Mucosa of descending colon (tissue), 3 donors: ENCODE measurements at regions of chr19 and their contacts with region 1.

Region 1: GRCh38 chr19:33143897-33144405 is 12.0 kb downstream of the WDR88 start:
- DNase-seq: peak; percentile 61 to 75 (median 71)
- ATAC-seq: peak; percentile 98
- H3K4me3 ChIP-seq: no peak overlapping the region
- H3K4me1 ChIP-seq: peaks cover 2% of the 10 kb centered on the region
- CTCF ChIP-seq: peak; percentile 91

Region 2: DNA sequence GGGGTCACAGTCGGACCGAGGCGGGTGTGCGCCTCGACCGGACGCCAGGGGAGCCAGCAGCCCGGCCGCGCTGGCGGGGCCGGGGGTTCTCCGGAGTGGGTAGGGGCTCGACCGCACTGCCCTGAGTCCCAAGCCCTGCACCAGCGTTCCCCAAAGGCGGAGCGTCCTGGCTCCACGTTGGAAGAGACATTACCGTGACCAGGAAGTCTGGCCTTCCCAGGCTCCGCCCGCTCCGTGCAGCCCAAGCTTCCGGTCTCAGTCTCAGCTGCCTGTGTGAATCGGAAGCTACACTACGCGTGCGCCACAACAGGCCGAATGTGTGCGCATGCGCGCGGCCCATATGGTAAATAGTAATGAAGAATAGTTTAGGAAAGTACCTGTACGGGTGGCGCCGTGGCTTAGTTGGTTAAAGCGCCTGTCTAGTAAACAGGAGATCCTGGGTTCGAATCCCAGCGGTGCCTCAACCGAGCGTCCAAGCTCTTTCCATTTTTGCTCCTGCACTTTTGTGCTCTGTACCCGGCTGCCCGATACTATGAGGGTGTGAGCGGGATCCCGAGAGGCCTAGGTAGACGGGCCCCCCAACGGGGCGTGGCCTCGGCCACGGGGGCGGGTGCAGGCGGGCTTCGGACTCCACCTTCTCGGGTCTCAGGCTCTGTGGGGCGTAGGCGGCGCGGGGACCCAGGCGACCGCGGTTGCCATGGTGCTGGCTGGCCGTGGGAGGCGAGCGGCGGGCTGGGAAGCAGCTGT is 32.9 kb after region 1 on chr19:
- intact Hi-C with region 1: loop called (anchors 5 kb)
- DNase-seq: peak; percentile 96 to 98 (median 97)
- ATAC-seq: peak; percentile 92
- H3K4me3 ChIP-seq: peak overlapping the region; percentile 74
- H3K4me1 ChIP-seq: peaks cover 13% of the 10 kb centered on the region
- CTCF ChIP-seq: no peak

Region 3: GRCh38 chr19:33193865-33194362 is 50.0 kb after region 1 on chr19 and contains the start of gene LRP3:
- intact Hi-C with region 1: no loop called
- DNase-seq: peak; percentile 27 to 57 (median 41)
- ATAC-seq: peak; percentile 64
- H3K4me3 ChIP-seq: peak within 1 kb of the TSS; percentile 17
- H3K4me1 ChIP-seq: peaks cover 5% of the 10 kb centered on the region
- CTCF ChIP-seq: no peak
- total RNA-seq, gene LRP3: 6.2 to 26.2 (median 7.4) TPM